Left lung (tissue), 14 donors: ENCODE measurements at regions of chr1 and their contacts with region 1.

Region 1: GRCh38 chr1:153494976-153495535 is 34.6 kb upstream of the S100A7 start:
- DNase-seq: peak; percentile 57 to 92 (median 72)
- ATAC-seq: peak; percentile 83
- H3K4me3 ChIP-seq: no peak overlapping the region
- H3K27ac ChIP-seq: no peak overlapping the region
- H3K4me1 ChIP-seq: no peaks in the 10 kb centered on the region
- H3K27me3 ChIP-seq: no peaks in the 10 kb centered on the region
- CTCF ChIP-seq: peak; percentile 90 to 93

Region 2: DNA sequence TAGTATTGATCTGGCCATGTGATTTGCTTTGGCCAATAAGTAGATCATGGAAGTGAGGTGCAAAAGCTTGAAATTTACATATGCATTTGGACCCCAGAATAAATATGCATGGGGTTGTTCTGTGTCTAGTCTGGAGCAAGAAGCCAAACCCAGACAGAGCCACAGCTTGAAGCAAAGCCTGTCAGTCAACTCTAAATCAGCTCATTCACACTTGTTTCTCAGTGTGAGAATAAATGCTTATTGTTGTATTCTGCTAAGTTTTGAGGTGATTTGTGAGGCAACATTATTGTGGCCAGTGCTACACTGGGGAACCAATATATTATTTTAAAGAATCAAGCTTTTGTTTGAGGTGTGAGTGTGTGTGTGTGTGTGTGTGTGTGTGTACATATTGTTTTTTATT is 170.1 kb before region 1 on chr1:
- intact Hi-C with region 1: no loop called
- DNase-seq: no peak
- ATAC-seq: no peak
- H3K4me3 ChIP-seq: no peak overlapping the region
- H3K27ac ChIP-seq: no peak overlapping the region
- H3K4me1 ChIP-seq: no peaks in the 10 kb centered on the region
- H3K27me3 ChIP-seq: no peaks in the 10 kb centered on the region
- CTCF ChIP-seq: no peak

Region 3: DNA sequence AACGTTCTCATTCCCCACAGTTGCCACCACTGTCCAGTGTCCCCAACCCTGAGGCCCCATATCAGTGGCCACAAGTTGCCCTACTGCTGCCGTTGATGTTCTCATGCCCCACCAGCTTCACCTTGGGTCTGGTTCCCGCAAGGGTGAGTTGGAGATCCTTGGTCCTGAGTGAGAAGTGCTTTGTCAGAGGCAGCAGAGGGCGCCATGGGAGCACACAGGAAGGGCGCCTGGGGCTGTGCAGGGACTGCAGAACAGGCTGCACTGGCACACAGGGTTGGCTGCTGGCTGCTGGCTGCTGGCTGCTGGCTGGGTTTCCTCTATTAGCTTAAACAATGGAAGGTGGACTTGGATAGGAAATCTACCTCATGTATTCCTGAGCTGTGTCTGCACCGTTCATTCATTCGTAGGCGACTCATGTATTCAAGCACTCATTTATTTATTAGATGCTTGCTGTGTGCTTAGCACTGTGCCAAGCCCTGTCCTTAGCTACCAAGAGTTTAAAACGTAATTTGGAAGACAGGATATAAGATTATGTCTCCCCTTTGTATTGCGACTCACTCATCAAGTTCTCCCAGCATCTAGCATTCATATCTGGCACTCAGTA is 139.5 kb before region 1 on chr1:
- intact Hi-C with region 1: loop called in 1 of 2 experiments (anchors 2 kb)
- DNase-seq: peak in 2 of 4 donors; percentile 80 to 95
- ATAC-seq: peak; percentile 79
- H3K4me3 ChIP-seq: no peak overlapping the region
- H3K27ac ChIP-seq: peak overlapping the region in 1 of 2 donors; percentile 94
- H3K4me1 ChIP-seq: peaks cover 0 to 39% of the 10 kb centered on the region in 2 donors
- H3K27me3 ChIP-seq: peaks cover 6 to 16% of the 10 kb centered on the region in 2 donors
- CTCF ChIP-seq: peak; percentile 30 to 54